Activated naive CD4-positive, alpha-beta T cell treated with anti-CD3 and anti-CD28 coated beads for 36 hours (primary cell): ENCODE measurements at regions of chr1 and their contacts with region 1.

Region 1: DNA sequence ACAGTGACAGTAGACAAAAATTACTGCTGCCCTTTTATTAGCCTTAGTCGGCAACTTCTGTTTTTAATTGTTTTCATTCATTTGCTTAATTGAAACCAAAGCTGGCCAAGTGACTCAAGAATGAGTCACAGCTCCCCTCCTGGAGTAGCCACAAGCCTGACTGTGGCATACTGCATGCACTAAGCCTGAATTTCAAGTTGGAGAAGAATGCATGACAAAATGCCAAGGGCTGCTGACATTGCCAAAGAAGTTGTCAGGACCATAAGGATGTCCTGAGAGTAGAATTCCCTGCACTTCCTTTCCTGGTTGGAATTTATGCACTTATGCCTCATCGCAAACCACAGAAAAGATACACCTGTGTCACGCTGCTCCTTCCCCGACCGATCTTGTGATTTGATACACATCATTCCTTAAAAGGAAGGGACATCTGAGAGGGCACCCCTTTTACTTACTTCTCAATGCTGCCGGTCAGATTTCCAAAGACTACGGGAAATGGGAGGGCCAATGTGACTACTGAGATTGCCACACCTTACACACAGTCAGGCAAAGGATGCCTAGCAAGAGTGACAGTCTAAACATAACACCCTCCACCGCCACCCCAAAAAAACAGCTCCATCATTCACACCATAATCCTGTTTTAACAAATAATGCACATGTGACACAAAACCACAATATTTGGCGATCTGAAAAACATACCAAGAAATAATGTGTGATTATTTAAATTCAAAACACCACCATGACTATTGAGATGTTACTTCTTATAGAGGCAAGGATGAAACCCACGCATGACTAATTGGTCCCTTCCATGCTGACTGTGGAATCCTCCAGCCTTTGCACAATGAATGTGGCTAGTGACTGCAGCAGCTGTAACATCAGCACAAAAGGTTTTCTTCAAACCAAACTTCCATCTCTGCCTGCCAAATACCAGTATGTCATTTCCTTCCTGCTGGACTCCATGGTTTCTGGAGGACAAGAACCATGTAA is 28.2 kb downstream of the VAV3 start:
- DNase-seq: peak; percentile 71
- H3K4me3 Mint-ChIP-seq: no peak overlapping the region
- H3K27ac Mint-ChIP-seq: no peak overlapping the region
- H3K4me1 Mint-ChIP-seq: peaks cover 58% of the 10 kb centered on the region
- H3K27me3 Mint-ChIP-seq: no peaks in the 10 kb centered on the region

Region 2: DNA sequence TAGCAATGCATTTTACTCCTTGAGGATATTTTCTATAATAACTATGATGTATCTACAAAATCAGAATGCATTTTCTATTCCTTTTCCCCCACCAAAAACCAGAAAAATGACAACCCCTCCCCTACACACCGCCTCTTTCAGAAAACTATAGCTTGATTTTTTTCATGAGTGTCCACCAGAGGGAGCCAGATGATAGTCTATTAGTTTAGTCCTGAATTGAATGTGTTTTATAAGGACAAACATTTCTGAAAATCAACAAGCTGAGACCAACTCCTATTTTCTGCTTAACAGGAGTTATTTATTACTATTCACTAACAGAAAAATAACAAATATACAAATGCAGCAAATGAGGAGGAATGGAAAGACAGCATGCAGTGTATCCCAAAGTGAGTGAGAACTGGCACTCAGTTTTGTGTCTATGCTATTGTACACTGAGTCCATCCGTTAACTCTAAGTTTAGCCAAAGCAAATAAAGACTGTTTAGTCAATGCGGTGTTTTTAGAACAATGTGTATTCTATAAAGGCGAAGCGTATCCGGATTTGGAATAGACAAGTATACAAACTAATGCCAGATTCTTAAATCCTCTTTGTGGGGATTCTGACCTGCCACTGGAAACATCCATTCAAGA is 154.5 kb before region 1 on chr1:
- CTCF ChIA-PET with region 1: interaction called, 4 read pairs
- intact Hi-C with region 1: loop called (anchors 1 kb)
- DNase-seq: peak; percentile 59
- H3K4me3 Mint-ChIP-seq: no peak overlapping the region
- H3K27ac Mint-ChIP-seq: no peak overlapping the region
- H3K4me1 Mint-ChIP-seq: peaks cover 23% of the 10 kb centered on the region
- H3K27me3 Mint-ChIP-seq: no peaks in the 10 kb centered on the region

Region 3: DNA sequence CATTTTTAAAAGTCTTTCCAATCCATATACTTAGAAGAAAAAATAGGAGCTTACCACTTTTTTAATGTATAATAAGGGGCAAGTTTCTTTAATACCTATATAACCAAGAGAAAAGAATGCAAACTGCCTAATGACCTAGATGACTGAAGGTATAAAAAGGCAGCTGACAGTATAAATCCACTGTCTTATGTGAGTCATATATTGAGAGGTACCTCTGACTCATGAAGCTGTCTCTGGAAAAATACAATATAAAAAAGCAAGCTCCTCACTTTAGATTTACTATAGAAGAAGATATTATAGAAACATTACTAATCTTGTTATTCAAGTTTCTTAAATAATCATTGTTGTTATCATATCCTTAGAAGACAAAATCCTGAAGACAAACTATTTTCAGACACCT is 116.0 kb before region 1 on chr1:
- CTCF ChIA-PET with region 1: no interaction called
- intact Hi-C with region 1: loop called (anchors 1 kb)
- DNase-seq: no peak
- H3K4me3 Mint-ChIP-seq: no peak overlapping the region
- H3K27ac Mint-ChIP-seq: peak overlapping the region; percentile 83
- H3K4me1 Mint-ChIP-seq: peaks cover 30% of the 10 kb centered on the region
- H3K27me3 Mint-ChIP-seq: no peaks in the 10 kb centered on the region

Region 4: GRCh38 chr1:107877092-107877491 is 59.7 kb before region 1 on chr1:
- CTCF ChIA-PET with region 1: no interaction called
- intact Hi-C with region 1: loop called (anchors 2 kb)
- DNase-seq: no peak
- H3K4me3 Mint-ChIP-seq: no peak overlapping the region
- H3K27ac Mint-ChIP-seq: no peak overlapping the region
- H3K4me1 Mint-ChIP-seq: peaks cover 39% of the 10 kb centered on the region
- H3K27me3 Mint-ChIP-seq: no peaks in the 10 kb centered on the region

Region 5: GRCh38 chr1:107919953-107920352 is 16.8 kb before region 1 on chr1:
- CTCF ChIA-PET with region 1: interaction called, 3 read pairs
- intact Hi-C with region 1: loop called (anchors 1 kb)
- DNase-seq: no peak
- H3K4me3 Mint-ChIP-seq: peak overlapping the region; percentile 8
- H3K27ac Mint-ChIP-seq: no peak overlapping the region
- H3K4me1 Mint-ChIP-seq: peaks cover 24% of the 10 kb centered on the region
- H3K27me3 Mint-ChIP-seq: no peaks in the 10 kb centered on the region

Region 6: DNA sequence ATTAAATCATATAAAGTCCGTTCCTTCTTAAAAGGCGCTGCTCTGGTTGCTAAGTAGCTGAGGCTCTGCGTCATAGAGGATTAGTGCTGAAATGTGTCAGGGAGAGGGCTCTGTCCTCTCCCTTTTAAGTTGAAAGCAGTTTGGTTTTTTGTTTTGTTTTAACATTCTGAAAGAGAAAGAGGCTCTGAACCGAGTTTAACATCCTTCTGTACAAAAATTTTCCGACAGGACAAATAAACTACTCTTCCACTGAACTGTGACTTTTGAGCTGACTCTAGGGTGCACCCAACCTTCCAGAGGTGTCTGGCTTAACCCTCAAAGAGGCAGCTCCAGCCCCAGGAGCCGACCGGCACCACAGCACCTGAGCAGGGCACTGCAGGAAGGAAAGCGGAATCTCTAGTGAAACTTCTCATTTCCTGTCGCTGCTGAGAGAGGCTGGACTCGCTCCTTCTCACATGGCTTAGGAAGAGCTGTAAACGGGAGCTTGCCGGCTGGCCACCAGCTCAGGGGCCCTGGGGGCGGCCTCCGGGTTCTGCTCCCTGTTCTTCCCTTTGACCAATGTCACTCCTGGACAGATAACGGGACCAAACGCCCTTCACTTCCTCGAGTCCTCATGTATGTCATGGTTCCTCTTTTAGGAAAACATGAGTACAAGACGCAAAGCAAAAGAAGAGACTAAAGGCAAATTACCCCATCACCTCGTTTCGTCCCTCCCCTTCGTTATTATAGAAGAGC is 27.0 kb after region 1 on chr1:
- CTCF ChIA-PET with region 1: interaction called, 8 read pairs
- intact Hi-C with region 1: loop called (anchors 1 kb)
- DNase-seq: peak; percentile 73
- H3K4me3 Mint-ChIP-seq: peak overlapping the region; percentile 87
- H3K27ac Mint-ChIP-seq: peak overlapping the region; percentile 96
- H3K4me1 Mint-ChIP-seq: peaks cover 25% of the 10 kb centered on the region
- H3K27me3 Mint-ChIP-seq: no peaks in the 10 kb centered on the region

Region 7: GRCh38 chr1:108503076-108503740 is 566.4 kb after region 1 on chr1:
- CTCF ChIA-PET with region 1: no interaction called
- intact Hi-C with region 1: loop called (anchors 1 kb)
- DNase-seq: no peak
- H3K4me3 Mint-ChIP-seq: no peak overlapping the region
- H3K27ac Mint-ChIP-seq: no peak overlapping the region
- H3K4me1 Mint-ChIP-seq: no peaks in the 10 kb centered on the region
- H3K27me3 Mint-ChIP-seq: peaks cover 26% of the 10 kb centered on the region